ENCODE measurements at regions of chr7 and their contacts with region 1.

Region 1: GRCh38 chr7:23938937-23939552 is 229.0 kb downstream of the STK31 start:
- DNase-seq: peak; percentile 47
- ATAC-seq: peak; percentile 100
- H3K4me3 ChIP-seq: no peak overlapping the region
- H3K27ac ChIP-seq: no peak overlapping the region
- H3K4me1 ChIP-seq: peaks cover 3 to 6% of the 10 kb centered on the region in 2 experiments; a peak in 2 of 4 replicates
- H3K27me3 ChIP-seq: no peaks in the 10 kb centered on the region
- CTCF ChIP-seq: peak; percentile 40 to 69 (median 68); a peak in 5 of 6 replicates
- POLR2A ChIP-seq: no peak
- RAD21 ChIP-seq: peak; percentile 74

Region 2: DNA sequence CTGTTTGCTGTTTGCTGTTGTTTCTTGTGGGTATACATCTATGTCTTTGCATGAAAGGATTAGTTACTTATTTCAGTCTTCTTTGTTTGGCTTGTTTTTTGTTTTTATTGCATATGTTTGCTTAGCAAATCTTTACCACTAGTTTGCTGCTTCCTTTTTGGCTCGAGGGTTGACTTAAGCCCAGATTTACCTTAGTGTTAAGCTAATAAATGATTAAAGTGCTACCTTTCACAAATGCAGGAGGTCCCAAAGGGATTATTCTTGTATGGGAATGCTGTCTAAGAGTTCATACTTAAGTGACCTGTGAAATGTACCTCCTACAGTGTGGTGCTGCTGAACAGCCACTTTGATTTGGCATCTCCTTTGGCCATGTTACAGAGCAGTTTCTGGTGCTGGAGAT is 71.5 kb after region 1 on chr7:
- CTCF ChIA-PET with region 1: no interaction called
- POLR2A ChIA-PET with region 1: no interaction called
- RAD21 ChIA-PET with region 1: no interaction called
- intact Hi-C with region 1: loop called (anchors 5 kb)
- DNase-seq: no peak
- ATAC-seq: no peak
- H3K4me3 ChIP-seq: no peak overlapping the region
- H3K27ac ChIP-seq: no peak overlapping the region
- H3K4me1 ChIP-seq: no peaks in the 10 kb centered on the region
- H3K27me3 ChIP-seq: no peaks in the 10 kb centered on the region
- CTCF ChIP-seq: no peak
- POLR2A ChIP-seq: no peak
- RAD21 ChIP-seq: no peak

Region 3: GRCh38 chr7:24227603-24228359 is 288.7 kb after region 1 on chr7:
- CTCF ChIA-PET with region 1: no interaction called
- POLR2A ChIA-PET with region 1: no interaction called
- RAD21 ChIA-PET with region 1: no interaction called
- intact Hi-C with region 1: no loop called
- DNase-seq: no peak
- ATAC-seq: no peak; the same call in 1 of the 2 replicates
- H3K4me3 ChIP-seq: no peak overlapping the region
- H3K27ac ChIP-seq: no peak overlapping the region
- H3K4me1 ChIP-seq: no peaks in the 10 kb centered on the region
- H3K27me3 ChIP-seq: no peaks in the 10 kb centered on the region; the same call in 1 of the 2 replicates
- CTCF ChIP-seq: no peak
- POLR2A ChIP-seq: no peak
- RAD21 ChIP-seq: no peak

Region 4: DNA sequence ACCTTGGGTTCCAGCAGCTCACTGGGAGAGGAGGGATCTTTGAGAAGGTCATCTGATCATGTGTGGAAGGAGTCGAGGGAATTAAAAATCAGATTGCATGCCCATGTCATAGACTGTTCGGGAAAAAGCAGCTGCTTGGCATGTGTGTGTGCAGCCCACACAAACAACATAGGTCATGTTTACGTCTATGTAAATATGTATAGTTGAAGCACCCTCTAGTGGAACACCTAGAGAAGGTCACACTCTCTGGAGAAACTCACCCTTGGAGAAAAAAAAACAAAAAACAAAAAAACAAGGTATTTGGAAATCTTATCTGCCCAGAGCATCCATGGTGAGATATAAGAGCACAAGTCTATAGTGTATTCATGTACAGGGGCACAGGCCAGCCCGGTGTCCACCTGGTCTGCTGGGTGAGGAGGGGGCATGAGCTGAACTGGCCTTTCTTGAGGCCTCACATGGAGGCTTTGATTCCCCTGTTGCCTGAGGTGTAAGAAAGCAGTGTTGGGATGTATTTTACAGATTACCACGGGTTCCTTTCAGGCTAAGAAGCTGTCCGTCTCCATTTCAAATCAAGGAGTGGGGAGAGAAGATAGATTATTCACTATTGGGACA is 443.0 kb after region 1 on chr7:
- CTCF ChIA-PET with region 1: interaction called, 9 read pairs
- POLR2A ChIA-PET with region 1: no interaction called
- RAD21 ChIA-PET with region 1: no interaction called
- intact Hi-C with region 1: loop called (anchors 5 kb)
- DNase-seq: peak; percentile 10
- ATAC-seq: peak; percentile 82
- H3K4me3 ChIP-seq: no peak overlapping the region
- H3K27ac ChIP-seq: no peak overlapping the region
- H3K4me1 ChIP-seq: peaks cover 6 to 10% of the 10 kb centered on the region in 2 experiments; a peak in 3 of 4 replicates
- H3K27me3 ChIP-seq: no peaks in the 10 kb centered on the region
- CTCF ChIP-seq: peak; percentile 49 to 69 (median 67); a peak in 5 of 6 replicates
- POLR2A ChIP-seq: no peak
- RAD21 ChIP-seq: peak; percentile 72

Region 5: DNA sequence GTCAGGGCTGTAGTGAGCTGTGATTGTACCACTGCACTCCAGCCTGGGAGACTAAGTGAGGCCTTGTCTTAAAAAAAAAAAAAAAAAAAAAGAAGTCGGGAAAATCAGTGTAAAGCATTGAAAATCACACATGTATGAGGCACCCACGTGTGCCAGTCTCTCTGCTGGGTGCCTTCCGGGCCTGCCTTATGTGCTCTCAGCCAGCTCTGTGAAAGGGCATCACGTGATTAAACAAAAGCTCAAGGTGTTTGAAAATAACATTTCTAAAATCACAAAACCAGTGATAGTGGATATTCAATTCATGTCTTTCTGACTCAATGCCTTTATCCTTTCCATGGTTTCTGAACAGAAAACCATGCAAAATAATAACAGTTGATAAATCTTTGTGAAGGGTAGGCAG is 509.0 kb after region 1 on chr7:
- CTCF ChIA-PET with region 1: no interaction called
- POLR2A ChIA-PET with region 1: no interaction called
- RAD21 ChIA-PET with region 1: no interaction called
- intact Hi-C with region 1: no loop called
- DNase-seq: no peak
- ATAC-seq: no peak
- H3K4me3 ChIP-seq: no peak overlapping the region
- H3K27ac ChIP-seq: no peak overlapping the region
- H3K4me1 ChIP-seq: no peaks in the 10 kb centered on the region
- H3K27me3 ChIP-seq: no peaks in the 10 kb centered on the region
- CTCF ChIP-seq: no peak
- POLR2A ChIP-seq: no peak
- RAD21 ChIP-seq: no peak

Region 6: DNA sequence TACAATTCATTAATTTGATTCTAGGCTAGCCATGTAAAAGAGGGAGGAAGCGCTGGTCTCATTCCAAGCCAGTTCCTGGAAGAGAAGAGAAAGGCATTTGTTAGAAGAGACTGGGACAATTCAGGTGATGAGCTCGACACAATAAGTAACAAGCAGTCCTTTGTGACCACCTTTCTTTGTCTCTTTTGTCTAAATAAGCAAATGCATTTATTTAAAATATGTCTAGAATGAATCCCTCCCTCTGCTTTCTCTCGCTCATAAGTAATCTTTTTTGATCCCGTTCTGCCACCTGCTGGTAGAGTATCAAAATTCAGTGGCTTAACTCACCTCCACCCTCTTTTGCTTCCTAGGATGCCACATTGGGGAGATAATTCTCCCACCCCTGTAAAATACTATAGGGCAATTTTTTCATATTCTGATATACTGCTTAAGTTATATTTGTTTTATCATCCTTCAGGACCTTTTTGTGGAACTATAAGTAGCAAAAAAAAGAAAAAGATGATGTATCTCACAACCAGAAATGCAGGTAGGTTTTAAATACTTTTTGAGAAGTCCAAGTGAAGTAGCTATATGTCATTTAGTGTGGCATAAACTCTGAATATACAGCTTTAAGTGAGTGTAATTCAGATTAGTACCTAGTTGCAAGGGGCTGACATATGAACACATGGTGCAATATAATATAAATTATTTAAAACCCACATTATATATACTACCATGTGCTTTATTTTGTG is 726.7 kb after region 1 on chr7:
- CTCF ChIA-PET with region 1: no interaction called
- POLR2A ChIA-PET with region 1: no interaction called
- RAD21 ChIA-PET with region 1: no interaction called
- intact Hi-C with region 1: loop called (anchors 10 kb)
- DNase-seq: peak; percentile 27
- ATAC-seq: peak; percentile 78
- H3K4me3 ChIP-seq: no peak overlapping the region
- H3K27ac ChIP-seq: no peak overlapping the region
- H3K4me1 ChIP-seq: 0 out of 4 replicates have a peak, but pooled peaks cover 0 to 7% of the 10 kb centered on the region in 2 experiments
- H3K27me3 ChIP-seq: no peaks in the 10 kb centered on the region
- CTCF ChIP-seq: peak; percentile 57 to 78 (median 58); a peak in 5 of 6 replicates
- POLR2A ChIP-seq: no peak
- RAD21 ChIP-seq: peak; percentile 76

Region 7: GRCh38 chr7:24715661-24716479 is 776.8 kb after region 1 on chr7:
- CTCF ChIA-PET with region 1: no interaction called
- POLR2A ChIA-PET with region 1: no interaction called
- RAD21 ChIA-PET with region 1: no interaction called
- intact Hi-C with region 1: no loop called
- DNase-seq: peak; percentile 22
- ATAC-seq: peak; percentile 91
- H3K4me3 ChIP-seq: no peak overlapping the region
- H3K27ac ChIP-seq: no peak overlapping the region
- H3K4me1 ChIP-seq: peaks cover 0 to under 1% of the 10 kb centered on the region in 2 experiments; a peak in 1 of 4 replicates
- H3K27me3 ChIP-seq: no peaks in the 10 kb centered on the region
- CTCF ChIP-seq: peak; percentile 25 to 66 (median 63); a peak in 4 of 6 replicates
- POLR2A ChIP-seq: no peak
- RAD21 ChIP-seq: peak; percentile 35; the same call in 1 of the 2 replicates